K562 (cell line): ENCODE measurements at regions of chr10 and their contacts with region 1.

Region 1: GRCh38 chr10:133245439-133246235 is 8.0 kb downstream of the VENTX start:
- DNase-seq: peak; percentile 86 to 95 (median 90)
- ATAC-seq: peak; percentile 88
- H3K4me3 ChIP-seq: peak overlapping the region; percentile 17; the same call in 1 of the 2 replicates
- H3K27ac ChIP-seq: peak overlapping the region; percentile 79
- H3K4me1 ChIP-seq: peaks cover 36 to 96% of the 10 kb centered on the region in 2 experiments
- H3K27me3 ChIP-seq: no peaks in the 10 kb centered on the region; a peak in 1 of 5 replicates
- CTCF ChIP-seq: no peak
- EP300 ChIP-seq: peak; percentile 81; the same call in 1 of the 2 replicates
- POLR2A ChIP-seq: peak; percentile 54; the same call in 1 of the 2 replicates
- RAD21 ChIP-seq: no peak

Region 2: GRCh38 chr10:133139551-133140065 is 106.0 kb before region 1 on chr10:
- CTCF ChIA-PET with region 1: no interaction called
- POLR2A ChIA-PET with region 1: interaction called, 7 read pairs
- in situ Hi-C with region 1: no loop called
- intact Hi-C with region 1: loop called (anchors 5 kb)
- DNase-seq: no peak
- ATAC-seq: no peak
- H3K4me3 ChIP-seq: no peak overlapping the region
- H3K27ac ChIP-seq: no peak overlapping the region
- H3K4me1 ChIP-seq: peaks cover 10 to 26% of the 10 kb centered on the region in 2 experiments; a peak in 4 of 5 replicates
- H3K27me3 ChIP-seq: peaks cover 0 to 16% of the 10 kb centered on the region in 2 experiments; a peak in 2 of 5 replicates
- CTCF ChIP-seq: no peak
- EP300 ChIP-seq: no peak
- POLR2A ChIP-seq: no peak
- RAD21 ChIP-seq: no peak

Region 3: GRCh38 chr10:133144771-133145170 is 100.9 kb before region 1 on chr10:
- CTCF ChIA-PET with region 1: no interaction called
- POLR2A ChIA-PET with region 1: interaction called, 7 read pairs
- in situ Hi-C with region 1: loop called (anchors 5 kb)
- intact Hi-C with region 1: loop called (anchors 5 kb)
- DNase-seq: no peak
- ATAC-seq: no peak
- H3K4me3 ChIP-seq: no peak overlapping the region
- H3K27ac ChIP-seq: no peak overlapping the region
- H3K4me1 ChIP-seq: peaks cover 10 to 26% of the 10 kb centered on the region in 2 experiments; a peak in 4 of 5 replicates
- H3K27me3 ChIP-seq: peaks cover 0 to 16% of the 10 kb centered on the region in 2 experiments; a peak in 2 of 5 replicates
- CTCF ChIP-seq: no peak
- EP300 ChIP-seq: no peak
- POLR2A ChIP-seq: no peak
- RAD21 ChIP-seq: no peak

Region 4: DNA sequence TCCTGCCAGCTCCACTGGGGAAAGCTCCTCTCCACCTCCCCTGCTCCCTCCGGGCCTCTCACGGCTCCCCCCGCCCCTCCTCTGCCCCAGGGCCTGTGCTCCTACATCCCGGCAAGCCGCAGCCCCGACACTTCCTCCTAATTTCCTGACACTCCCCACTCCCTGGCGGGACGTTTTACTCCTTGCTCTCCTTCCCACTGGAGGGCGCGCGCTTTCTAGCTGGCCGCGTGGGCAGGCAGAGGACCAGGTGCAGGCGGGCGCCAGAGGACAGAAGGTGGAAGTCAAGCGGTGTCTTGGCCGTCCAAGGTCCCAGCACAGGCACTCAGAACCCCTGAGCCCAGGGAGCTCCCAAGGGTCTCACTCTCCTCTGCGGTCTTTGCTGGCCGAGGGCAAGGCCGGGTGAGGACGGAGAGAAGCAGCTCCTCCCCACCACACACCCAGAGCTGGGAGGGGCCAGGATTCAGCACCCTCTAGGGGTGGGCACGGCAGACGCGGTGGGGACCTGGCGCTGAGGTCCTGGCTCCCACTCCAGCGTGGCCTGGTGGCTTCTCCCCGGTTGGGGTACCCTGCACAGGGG is 11.9 kb after region 1 on chr10:
- CTCF ChIA-PET with region 1: no interaction called
- POLR2A ChIA-PET with region 1: interaction called, 18 read pairs
- in situ Hi-C with region 1: no loop called
- intact Hi-C with region 1: no loop called
- DNase-seq: peak; percentile 53 to 77 (median 58)
- ATAC-seq: peak; percentile 71
- H3K4me3 ChIP-seq: no peak overlapping the region
- H3K27ac ChIP-seq: no peak overlapping the region; the same call in 1 of the 3 replicates
- H3K4me1 ChIP-seq: peaks cover 2 to 69% of the 10 kb centered on the region in 2 experiments; a peak in 3 of 5 replicates
- H3K27me3 ChIP-seq: no peaks in the 10 kb centered on the region
- CTCF ChIP-seq: peak; percentile 59 to 61 (median 61)
- EP300 ChIP-seq: no peak
- POLR2A ChIP-seq: peak; percentile 38; the same call in 1 of the 2 replicates
- RAD21 ChIP-seq: peak; percentile 56 to 72